Aorta (tissue), 5 donors: ENCODE measurements at regions of chr12 and their contacts with region 1.

Region 1: DNA sequence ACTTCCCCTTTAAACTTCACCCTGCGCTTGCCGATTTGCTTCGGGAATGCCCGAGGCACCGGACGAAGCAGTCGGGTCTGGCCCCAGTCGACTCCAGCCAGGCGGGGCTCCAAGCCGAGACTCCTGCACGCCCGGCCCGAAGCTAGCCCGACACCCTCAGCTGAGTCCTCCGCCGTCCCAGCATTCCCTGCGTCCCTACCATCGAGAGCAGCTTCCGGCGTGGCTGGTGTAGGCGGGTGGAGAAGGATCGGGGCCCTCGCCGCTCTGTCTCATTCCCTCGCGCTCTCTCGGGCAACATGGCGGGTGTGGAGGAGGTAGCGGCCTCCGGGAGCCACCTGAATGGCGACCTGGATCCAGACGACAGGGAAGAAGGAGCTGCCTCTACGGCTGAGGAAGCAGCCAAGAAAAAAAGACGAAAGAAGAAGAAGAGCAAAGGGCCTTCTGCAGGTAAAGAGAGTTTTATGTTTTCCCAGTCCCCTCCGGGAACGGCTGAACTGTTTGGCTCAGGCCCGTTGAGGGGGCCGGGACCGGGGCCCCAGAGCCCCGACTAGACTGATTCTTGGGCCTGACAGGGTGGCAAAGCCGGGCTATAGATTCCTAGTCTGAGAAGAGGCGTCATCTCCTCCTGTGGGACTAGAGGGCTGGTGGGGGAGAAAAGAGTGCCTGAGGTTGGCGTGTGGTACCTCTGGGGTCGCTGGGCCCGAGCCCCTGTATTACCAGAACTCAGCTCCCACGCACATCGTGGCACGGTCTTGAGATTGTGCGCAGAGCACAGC is at the start of gene METAP2:
- DNase-seq: peak; percentile 98
- ATAC-seq: peak; percentile 100
- H3K4me3 ChIP-seq: peak within 1 kb of the TSS; percentile 75 to 90
- H3K27ac ChIP-seq: peak within 1 kb of the TSS; percentile 37 to 73
- H3K4me1 ChIP-seq: peaks cover 0 to 10% of the 10 kb centered on the region in 2 donors
- H3K27me3 ChIP-seq: no peaks in the 10 kb centered on the region
- total RNA-seq, gene METAP2: 55.7 to 64.2 TPM

Region 2: DNA sequence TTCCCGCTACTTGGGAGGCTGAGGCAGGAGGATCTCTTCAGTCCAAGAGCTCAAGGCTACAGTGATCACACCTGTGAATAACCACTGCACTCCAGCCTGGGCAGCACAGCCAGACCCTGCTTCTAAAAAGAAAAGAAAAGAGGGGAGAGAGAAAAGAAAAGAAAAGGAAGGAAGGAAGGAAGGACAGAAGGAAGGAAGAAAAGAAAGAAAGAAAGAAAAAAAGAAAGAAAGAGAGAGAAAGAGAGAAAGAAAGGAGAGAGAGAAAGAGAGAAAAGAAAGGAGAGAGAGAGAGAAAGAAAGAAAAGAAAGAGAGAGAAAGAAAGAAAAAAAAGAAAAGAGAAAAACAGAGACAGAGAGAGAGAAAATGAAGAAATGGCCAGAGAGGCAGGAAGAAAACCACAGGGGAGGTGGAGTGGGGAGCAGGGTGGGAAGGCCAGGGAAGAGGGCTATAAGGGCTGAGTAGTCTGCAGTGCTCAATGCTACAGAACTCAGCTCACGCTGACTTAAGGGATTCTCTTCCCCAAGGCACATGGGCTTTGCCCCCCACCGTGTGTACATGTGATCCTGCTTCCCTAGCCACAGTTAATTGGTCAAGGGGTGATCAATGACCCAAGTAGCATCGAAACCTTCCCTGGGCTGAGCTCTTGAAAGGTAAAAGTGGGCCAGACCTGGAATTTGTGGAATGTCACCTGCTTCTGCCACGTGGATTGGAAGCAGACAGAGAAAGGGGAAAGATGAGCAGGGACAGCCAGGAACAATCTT is 733.3 kb before region 1 on chr12:
- intact Hi-C with region 1: no loop called
- DNase-seq: no peak
- ATAC-seq: no peak
- H3K4me3 ChIP-seq: no peak overlapping the region
- H3K27ac ChIP-seq: no peak overlapping the region
- H3K4me1 ChIP-seq: no peaks in the 10 kb centered on the region
- H3K27me3 ChIP-seq: no peaks in the 10 kb centered on the region

Region 3: GRCh38 chr12:95191060-95191696 is 282.9 kb before region 1 on chr12:
- intact Hi-C with region 1: no loop called
- DNase-seq: no peak
- ATAC-seq: no peak
- H3K4me3 ChIP-seq: no peak overlapping the region
- H3K27ac ChIP-seq: no peak overlapping the region
- H3K4me1 ChIP-seq: no peaks in the 10 kb centered on the region
- H3K27me3 ChIP-seq: no peaks in the 10 kb centered on the region

Region 4: GRCh38 chr12:95371571-95371970 is 102.5 kb before region 1 on chr12:
- intact Hi-C with region 1: loop called in 1 of 2 experiments (anchors 10 kb)
- DNase-seq: no peak
- ATAC-seq: no peak
- H3K4me3 ChIP-seq: no peak overlapping the region
- H3K27ac ChIP-seq: no peak overlapping the region
- H3K4me1 ChIP-seq: no peaks in the 10 kb centered on the region
- H3K27me3 ChIP-seq: no peaks in the 10 kb centered on the region

Region 5: GRCh38 chr12:95385246-95386035 is 88.6 kb before region 1 on chr12:
- intact Hi-C with region 1: loop called in 1 of 2 experiments (anchors 10 kb)
- DNase-seq: peak in 1 of 2 donors; percentile 52
- ATAC-seq: peak; percentile 86
- H3K4me3 ChIP-seq: peak overlapping the region; percentile 34 to 96
- H3K27ac ChIP-seq: peak overlapping the region; percentile 93 to 100
- H3K4me1 ChIP-seq: peaks cover 2 to 3% of the 10 kb centered on the region in 2 donors
- H3K27me3 ChIP-seq: no peaks in the 10 kb centered on the region

Region 6: GRCh38 chr12:95418142-95418541 is 55.9 kb before region 1 on chr12:
- intact Hi-C with region 1: loop called in 1 of 2 experiments (anchors 5 kb)
- DNase-seq: no peak
- ATAC-seq: peak; percentile 82
- H3K4me3 ChIP-seq: no peak overlapping the region
- H3K27ac ChIP-seq: peak overlapping the region; percentile 43 to 52
- H3K4me1 ChIP-seq: peaks cover 4 to 10% of the 10 kb centered on the region in 2 donors
- H3K27me3 ChIP-seq: no peaks in the 10 kb centered on the region

Region 7: DNA sequence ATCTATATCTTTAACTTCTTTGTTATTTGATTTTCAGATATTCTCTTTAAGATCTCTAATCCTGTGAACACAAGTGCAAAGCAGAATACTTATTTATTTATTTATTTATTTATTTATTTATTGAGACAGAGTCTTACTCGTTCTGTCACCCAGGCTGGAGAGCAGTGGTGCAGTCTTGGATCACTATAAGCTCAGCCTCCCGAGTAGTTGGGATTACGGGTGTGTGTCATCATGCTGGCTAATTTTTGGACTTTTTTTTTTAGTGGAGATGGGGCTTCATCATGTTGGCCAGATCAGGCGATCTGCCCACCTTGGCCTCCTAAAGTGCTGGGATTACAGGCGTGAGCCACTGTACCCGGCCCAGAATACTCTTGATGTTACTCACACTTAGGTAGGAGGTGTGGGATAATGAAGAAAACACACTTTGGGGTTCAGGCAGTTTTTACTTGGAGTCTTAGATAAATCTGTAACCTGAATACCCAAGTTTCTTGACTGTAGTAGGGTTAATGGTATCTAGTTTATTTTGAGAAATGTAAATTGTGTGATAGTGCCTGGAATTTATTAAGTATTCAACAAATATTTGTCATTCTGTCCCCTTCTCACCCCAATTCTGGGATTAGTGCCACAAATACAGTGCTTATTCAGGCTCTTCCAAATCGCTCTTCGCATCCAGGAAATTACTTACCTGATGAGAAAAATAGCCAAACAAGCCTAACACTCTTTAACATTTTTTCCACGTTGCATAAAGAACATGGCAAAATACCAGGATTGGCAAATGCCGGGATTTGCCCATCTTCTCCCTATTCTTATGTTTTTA is 32.8 kb after region 1 on chr12:
- intact Hi-C with region 1: loop called in 1 of 2 experiments (anchors 5 kb)
- DNase-seq: no peak
- ATAC-seq: no peak
- H3K4me3 ChIP-seq: no peak overlapping the region
- H3K27ac ChIP-seq: peak overlapping the region in 1 of 2 donors; percentile 12
- H3K4me1 ChIP-seq: peaks cover 0 to 7% of the 10 kb centered on the region in 2 donors
- H3K27me3 ChIP-seq: no peaks in the 10 kb centered on the region

Region 8: GRCh38 chr12:95548539-95549391 is 74.7 kb after region 1 on chr12:
- intact Hi-C with region 1: no loop called
- DNase-seq: peak; percentile 64 to 87
- ATAC-seq: peak; percentile 85
- H3K4me3 ChIP-seq: peak overlapping the region; percentile 54 to 68
- H3K27ac ChIP-seq: peak overlapping the region in 1 of 2 donors; percentile 45
- H3K4me1 ChIP-seq: no peaks in the 10 kb centered on the region
- H3K27me3 ChIP-seq: no peaks in the 10 kb centered on the region